Activated CD4-positive, alpha-beta T cell treated with anti-CD3 and anti-CD28 coated beads for 36 hours (primary cell): ENCODE measurements at regions of chr3 and their contacts with region 1.

Region 1: GRCh38 chr3:172595641-172596393 is 72.6 kb upstream of the TNFSF10 start:
- DNase-seq: peak; percentile 55
- ATAC-seq: peak; percentile 15
- H3K4me3 Mint-ChIP-seq: peak overlapping the region; percentile 66
- H3K27ac Mint-ChIP-seq: peak overlapping the region; percentile 75
- H3K4me1 Mint-ChIP-seq: peaks cover 54% of the 10 kb centered on the region
- H3K27me3 Mint-ChIP-seq: peaks cover 4% of the 10 kb centered on the region

Region 2: DNA sequence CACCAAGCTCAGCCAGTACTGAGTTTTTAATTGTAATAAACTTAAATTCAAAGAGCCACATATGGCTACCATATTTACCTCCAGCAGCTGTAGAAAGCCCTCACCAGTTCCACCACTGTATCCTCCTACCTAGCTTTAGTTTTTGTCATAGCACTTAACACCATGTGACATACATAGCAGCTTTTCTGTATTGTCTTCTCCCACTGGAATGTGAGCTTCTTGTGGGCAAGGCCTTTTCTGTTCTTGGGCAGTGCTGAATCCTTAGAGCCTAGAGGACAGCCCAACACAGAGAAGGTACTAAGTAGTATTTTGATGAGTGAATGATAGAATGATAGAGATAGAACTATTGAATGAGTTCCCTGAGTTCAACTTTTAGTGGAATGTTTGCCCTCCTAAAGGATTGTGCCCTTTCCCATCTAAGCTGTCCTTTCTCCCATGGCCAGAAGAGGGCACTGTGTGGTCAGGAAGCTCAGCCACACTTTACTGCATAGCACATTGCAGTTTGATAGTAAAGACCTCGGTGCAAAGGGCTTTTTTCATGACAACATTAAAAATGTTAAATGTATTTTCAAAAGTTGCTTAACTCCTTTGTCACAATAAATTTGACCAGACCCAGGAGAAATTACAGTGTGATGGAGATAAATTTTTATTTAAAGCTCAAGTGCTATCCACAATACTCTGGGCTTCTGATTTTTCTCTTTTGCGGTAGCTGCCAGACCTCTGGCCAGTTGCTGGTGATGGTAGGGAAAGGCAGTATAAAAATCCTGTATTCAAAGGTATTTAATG is 263.4 kb before region 1 on chr3:
- CTCF ChIA-PET with region 1: interaction called, 10 read pairs
- POLR2A ChIA-PET with region 1: no interaction called
- intact Hi-C with region 1: no loop called
- DNase-seq: peak; percentile 67
- ATAC-seq: peak; percentile 81
- H3K4me3 Mint-ChIP-seq: no peak overlapping the region
- H3K27ac Mint-ChIP-seq: no peak overlapping the region
- H3K4me1 Mint-ChIP-seq: peaks cover 5% of the 10 kb centered on the region
- H3K27me3 Mint-ChIP-seq: no peaks in the 10 kb centered on the region

Region 3: DNA sequence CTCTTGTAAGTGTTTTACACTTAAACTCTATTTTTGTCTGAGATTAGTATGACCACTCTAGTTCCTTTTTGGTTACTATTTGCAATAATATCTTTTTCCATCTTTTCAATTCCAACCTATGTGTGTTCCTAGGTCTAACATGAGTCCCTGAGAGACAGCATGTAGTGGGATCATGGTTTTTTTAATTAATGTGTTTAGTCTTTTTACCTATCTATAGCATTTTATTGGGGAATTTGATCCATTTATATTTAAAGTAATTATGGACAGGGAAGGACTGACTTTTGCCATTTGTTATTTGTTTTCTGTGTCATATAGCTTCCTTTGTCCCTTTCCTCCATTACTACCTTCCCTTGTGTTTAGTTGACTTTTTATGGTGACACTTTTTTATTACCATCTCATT is 94.3 kb before region 1 on chr3:
- CTCF ChIA-PET with region 1: interaction called, 32 read pairs
- POLR2A ChIA-PET with region 1: interaction called, 3 read pairs
- intact Hi-C with region 1: no loop called
- DNase-seq: no peak
- ATAC-seq: no peak
- H3K4me3 Mint-ChIP-seq: no peak overlapping the region
- H3K27ac Mint-ChIP-seq: no peak overlapping the region
- H3K4me1 Mint-ChIP-seq: peaks cover 10% of the 10 kb centered on the region
- H3K27me3 Mint-ChIP-seq: no peaks in the 10 kb centered on the region

Region 4: DNA sequence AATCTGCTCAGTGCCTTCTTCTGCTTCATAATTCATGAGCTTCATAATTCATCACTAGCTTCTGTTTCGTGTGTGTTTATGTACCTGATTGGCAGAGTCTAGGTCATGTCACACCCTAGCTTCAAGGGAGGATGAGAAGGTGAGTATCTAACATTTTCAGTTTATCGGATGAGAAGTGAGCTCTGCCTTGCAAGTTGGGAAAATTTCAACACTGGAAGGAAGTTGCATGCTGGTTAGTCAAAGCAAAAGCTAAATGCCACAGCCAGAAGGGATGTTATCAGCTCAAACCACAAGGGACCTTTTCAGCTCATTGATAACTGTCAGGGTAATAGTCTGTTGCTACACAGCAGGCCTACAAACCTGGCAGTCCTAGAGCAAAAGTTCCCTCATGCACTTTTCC is 65.3 kb before region 1 on chr3:
- CTCF ChIA-PET with region 1: interaction called, 29 read pairs
- POLR2A ChIA-PET with region 1: interaction called, 6 read pairs
- intact Hi-C with region 1: loop called (anchors 1 kb)
- DNase-seq: peak; percentile 24
- ATAC-seq: peak; percentile 78
- H3K4me3 Mint-ChIP-seq: peak overlapping the region; percentile 15
- H3K27ac Mint-ChIP-seq: peak overlapping the region; percentile 48
- H3K4me1 Mint-ChIP-seq: peaks cover 22% of the 10 kb centered on the region
- H3K27me3 Mint-ChIP-seq: no peaks in the 10 kb centered on the region

Region 5: GRCh38 chr3:172580680-172581401 is 15.0 kb before region 1 on chr3:
- CTCF ChIA-PET with region 1: interaction called, 17 read pairs
- POLR2A ChIA-PET with region 1: interaction called, 4 read pairs
- intact Hi-C with region 1: loop called (anchors 1 kb)
- DNase-seq: no peak
- ATAC-seq: peak; percentile 62
- H3K4me3 Mint-ChIP-seq: peak overlapping the region; percentile 20
- H3K27ac Mint-ChIP-seq: peak overlapping the region; percentile 85
- H3K4me1 Mint-ChIP-seq: peaks cover 82% of the 10 kb centered on the region
- H3K27me3 Mint-ChIP-seq: no peaks in the 10 kb centered on the region

Region 6: GRCh38 chr3:172622916-172623700 is 27.3 kb after region 1 on chr3:
- CTCF ChIA-PET with region 1: interaction called, 10 read pairs
- POLR2A ChIA-PET with region 1: no interaction called
- intact Hi-C with region 1: no loop called
- DNase-seq: peak; percentile 64
- ATAC-seq: peak; percentile 51
- H3K4me3 Mint-ChIP-seq: no peak overlapping the region
- H3K27ac Mint-ChIP-seq: no peak overlapping the region
- H3K4me1 Mint-ChIP-seq: peaks cover 10% of the 10 kb centered on the region
- H3K27me3 Mint-ChIP-seq: no peaks in the 10 kb centered on the region

Region 7: DNA sequence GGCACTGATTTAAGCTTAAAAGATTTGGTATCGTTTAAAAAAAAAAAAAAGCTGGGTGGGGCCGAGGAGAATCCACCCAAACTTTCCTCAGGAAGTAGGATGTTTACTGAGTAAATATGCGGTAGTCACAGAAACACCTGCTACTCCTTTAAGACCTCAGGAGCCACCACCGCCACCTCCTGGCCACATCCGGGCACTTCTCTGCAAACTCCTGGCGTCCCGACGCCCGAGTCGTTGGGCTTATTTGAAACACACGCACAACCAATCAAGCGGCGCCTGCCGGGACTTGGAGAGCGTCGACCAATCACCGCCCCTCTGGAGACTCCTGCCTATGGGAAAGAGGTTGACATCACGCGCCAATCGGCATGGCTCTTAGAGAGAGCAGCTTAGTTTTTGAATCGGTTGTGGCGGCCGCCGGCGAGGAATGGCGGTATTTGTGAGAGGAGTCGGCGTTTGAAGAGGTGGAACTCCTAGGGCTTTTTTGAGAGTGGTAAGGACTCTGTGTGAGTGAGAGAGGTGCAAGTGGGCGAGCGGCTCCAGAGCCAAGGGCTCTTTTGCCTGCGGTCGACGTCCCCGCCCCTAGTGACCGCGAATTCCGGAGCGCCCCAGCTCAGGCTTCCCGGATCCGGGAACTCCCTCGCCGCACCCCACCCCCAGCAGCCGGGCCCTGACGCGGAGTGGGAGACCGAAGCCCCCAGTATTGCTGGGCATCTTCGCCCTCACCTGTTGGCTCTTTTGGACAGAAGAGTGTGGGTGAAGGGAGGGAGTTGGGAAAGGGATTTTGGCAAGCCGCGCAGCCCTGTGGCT is 154.8 kb after region 1 on chr3 and contains the start of gene ECT2:
- CTCF ChIA-PET with region 1: no interaction called
- POLR2A ChIA-PET with region 1: no interaction called
- intact Hi-C with region 1: loop called in 1 of 2 experiments (anchors 5 kb)
- DNase-seq: peak; percentile 99
- ATAC-seq: peak; percentile 100
- H3K4me3 Mint-ChIP-seq: peak within 1 kb of the TSS; percentile 98
- H3K27ac Mint-ChIP-seq: peak within 1 kb of the TSS; percentile 99
- H3K4me1 Mint-ChIP-seq: peaks cover 21% of the 10 kb centered on the region
- H3K27me3 Mint-ChIP-seq: no peaks in the 10 kb centered on the region
- total RNA-seq, gene ECT2: 39.4 to 40.6 TPM

Region 8: DNA sequence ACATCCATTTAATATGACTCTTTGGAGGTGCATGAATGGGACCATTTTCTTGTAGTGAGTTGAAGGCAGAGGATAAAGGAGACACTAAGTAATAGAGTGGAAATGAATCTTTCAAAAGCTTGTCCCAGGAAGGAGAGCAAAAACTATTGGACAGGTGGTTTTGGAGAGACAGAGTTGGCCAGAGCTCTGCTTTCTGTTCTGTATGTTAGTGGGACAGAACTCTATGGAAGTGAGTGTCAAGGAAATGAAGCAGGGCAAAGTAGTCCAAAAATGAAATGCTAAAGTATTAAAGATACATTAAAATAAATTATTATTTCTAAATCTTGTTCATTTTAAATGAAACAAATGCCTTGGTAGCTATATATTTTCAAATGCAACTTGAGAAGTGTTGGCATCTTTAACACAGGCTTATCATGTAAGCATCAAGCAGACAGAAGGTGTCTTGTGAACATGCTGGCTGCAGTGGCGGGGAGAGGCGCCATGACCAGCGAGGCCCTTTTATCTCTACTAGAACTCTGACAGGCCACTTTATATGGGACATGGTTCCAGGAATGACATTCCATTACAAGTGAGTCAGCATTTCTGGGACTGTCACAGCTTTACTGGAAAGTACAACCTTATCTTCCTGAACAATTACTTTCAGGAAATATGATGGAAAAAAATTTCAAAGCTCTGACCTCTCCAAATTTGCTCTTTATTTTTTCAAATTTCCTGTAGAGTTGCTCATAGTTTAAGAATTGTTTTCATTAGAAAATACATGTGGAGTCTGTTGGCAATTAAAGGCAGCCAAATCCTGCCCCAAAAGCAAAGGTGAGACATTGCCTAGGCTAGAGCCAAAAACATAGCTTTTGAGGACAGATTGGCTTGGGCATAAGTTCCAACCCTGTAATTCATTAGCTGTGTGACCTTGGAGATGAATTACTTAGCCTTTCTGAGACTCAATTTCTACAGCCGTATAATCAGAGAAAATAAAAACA is 261.2 kb after region 1 on chr3:
- CTCF ChIA-PET with region 1: no interaction called
- POLR2A ChIA-PET with region 1: no interaction called
- intact Hi-C with region 1: no loop called
- DNase-seq: no peak
- ATAC-seq: no peak
- H3K4me3 Mint-ChIP-seq: no peak overlapping the region
- H3K27ac Mint-ChIP-seq: no peak overlapping the region
- H3K4me1 Mint-ChIP-seq: no peaks in the 10 kb centered on the region
- H3K27me3 Mint-ChIP-seq: peaks cover 5% of the 10 kb centered on the region